A549 (cell line): ENCODE measurements at regions of chr19 and their contacts with region 1.

Region 1: DNA sequence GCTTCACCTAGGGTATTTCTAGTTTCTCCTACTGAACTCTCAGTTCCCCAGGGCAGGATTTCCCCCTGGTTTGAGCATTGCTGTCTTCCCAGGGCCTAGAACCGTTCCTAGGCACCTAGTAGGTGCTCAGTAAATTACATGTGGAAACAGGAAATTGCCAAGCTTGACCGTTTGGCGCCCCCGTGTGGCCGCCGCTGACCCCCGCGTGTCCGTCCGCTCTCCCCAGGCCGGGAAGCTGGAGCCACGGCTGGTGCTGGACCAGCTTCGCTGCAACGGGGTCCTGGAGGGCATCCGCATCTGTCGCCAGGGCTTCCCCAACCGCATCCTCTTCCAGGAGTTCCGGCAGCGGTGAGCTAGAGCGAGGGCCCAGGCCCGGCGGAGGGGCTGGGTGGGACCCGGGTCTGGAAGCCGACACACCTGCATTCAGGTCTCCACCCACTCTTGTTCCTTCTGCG is 55.5 kb downstream of the MYH14 start:
- DNase-seq: peak; percentile 39 to 42
- ATAC-seq: peak; percentile 41 to 71; a peak in 3 of 6 replicates
- H3K4me3 ChIP-seq: no peak overlapping the region
- H3K27ac ChIP-seq: no peak overlapping the region
- H3K4me1 ChIP-seq: no peaks in the 10 kb centered on the region
- CTCF ChIP-seq: peak; percentile 65
- EP300 ChIP-seq: no peak
- POLR2A ChIP-seq: no peak
- RAD21 ChIP-seq: peak; percentile 61 to 63

Region 2: GRCh38 chr19:50198429-50199258 is 60.3 kb before region 1 on chr19:
- CTCF ChIA-PET with region 1: no interaction called
- POLR2A ChIA-PET with region 1: no interaction called
- DNase-seq: no peak
- ATAC-seq: no peak
- H3K4me3 ChIP-seq: no peak overlapping the region
- H3K27ac ChIP-seq: no peak overlapping the region
- H3K4me1 ChIP-seq: 0 out of 3 replicates have a peak, but pooled peaks cover 3% of the 10 kb centered on the region
- CTCF ChIP-seq: no peak
- EP300 ChIP-seq: no peak
- POLR2A ChIP-seq: no peak
- RAD21 ChIP-seq: no peak

Region 3: DNA sequence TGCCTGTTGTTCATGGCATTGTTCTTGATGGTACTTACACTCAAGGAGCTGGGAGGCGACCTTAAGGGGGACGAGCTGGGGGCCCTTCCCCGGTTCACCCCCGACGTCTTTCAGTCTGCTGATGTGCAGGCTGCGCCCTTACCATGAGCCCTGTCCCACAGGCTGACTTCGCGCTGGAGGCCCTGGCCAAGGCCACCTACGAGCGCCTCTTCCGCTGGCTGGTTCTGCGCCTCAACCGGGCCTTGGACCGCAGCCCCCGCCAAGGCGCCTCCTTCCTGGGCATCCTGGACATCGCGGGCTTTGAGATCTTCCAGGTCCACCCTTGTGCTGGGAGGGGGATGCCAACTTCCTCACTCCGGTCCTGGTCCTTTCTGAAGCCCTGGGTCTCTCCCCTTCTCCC is 10.1 kb before region 1 on chr19:
- CTCF ChIA-PET with region 1: interaction called, 13 read pairs
- POLR2A ChIA-PET with region 1: no interaction called
- DNase-seq: no peak
- ATAC-seq: peak in 1 of 2 experiments; percentile 40; a peak in 2 of 6 replicates
- H3K4me3 ChIP-seq: no peak overlapping the region
- H3K27ac ChIP-seq: no peak overlapping the region
- H3K4me1 ChIP-seq: no peaks in the 10 kb centered on the region
- CTCF ChIP-seq: no peak
- EP300 ChIP-seq: no peak
- POLR2A ChIP-seq: no peak
- RAD21 ChIP-seq: no peak